ENCODE measurements at regions of chr6 and their contacts with region 1.

Region 1: GRCh38 chr6:136158387-136158821 is 91.7 kb downstream of the MTFR2 start:
- DNase-seq: peak; percentile 53 to 79 (median 72)
- ATAC-seq: peak; percentile 86 to 96 (median 90)
- H3K4me3 ChIP-seq: no peak overlapping the region
- H3K27ac ChIP-seq: peak overlapping the region in 11 of 12 donors; percentile 2 to 61 (median 23)
- H3K4me1 ChIP-seq: peaks cover 0 to 47% (median 11%) of the 10 kb centered on the region in 12 donors
- H3K27me3 ChIP-seq: no peaks in the 10 kb centered on the region
- CTCF ChIP-seq: peak in 8 of 12 donors; percentile 26 to 68 (median 36)
- POLR2A ChIP-seq: no peak

Region 2: GRCh38 chr6:135830452-135830881 is 327.9 kb before region 1 on chr6:
- intact Hi-C with region 1: no loop called
- DNase-seq: no peak
- ATAC-seq: no peak
- H3K4me3 ChIP-seq: no peak overlapping the region
- H3K27ac ChIP-seq: no peak overlapping the region
- H3K4me1 ChIP-seq: no peaks in the 10 kb centered on the region
- H3K27me3 ChIP-seq: peaks cover 0 to 5% (median 0%) of the 10 kb centered on the region in 9 donors
- CTCF ChIP-seq: no peak
- POLR2A ChIP-seq: no peak

Region 3: GRCh38 chr6:135999393-135999792 is 159.0 kb before region 1 on chr6:
- intact Hi-C with region 1: no loop called
- DNase-seq: no peak
- ATAC-seq: no peak
- H3K4me3 ChIP-seq: no peak overlapping the region
- H3K27ac ChIP-seq: no peak overlapping the region
- H3K4me1 ChIP-seq: peaks cover 0 to 17% (median 0%) of the 10 kb centered on the region in 12 donors
- H3K27me3 ChIP-seq: no peaks in the 10 kb centered on the region
- CTCF ChIP-seq: no peak
- POLR2A ChIP-seq: no peak

Region 4: GRCh38 chr6:136031982-136032381 is 126.4 kb before region 1 on chr6:
- intact Hi-C with region 1: loop called in 4 of 10 experiments (anchors 5 to 10 kb)
- DNase-seq: peak in 1 of 5 donors; percentile 45
- ATAC-seq: peak in 2 of 4 donors; percentile 55
- H3K4me3 ChIP-seq: no peak overlapping the region
- H3K27ac ChIP-seq: peak overlapping the region in 1 of 12 donors; percentile 6
- H3K4me1 ChIP-seq: peaks cover 0 to 36% (median 22%) of the 10 kb centered on the region in 12 donors
- H3K27me3 ChIP-seq: no peaks in the 10 kb centered on the region
- CTCF ChIP-seq: peak; percentile 35 to 70 (median 58)
- POLR2A ChIP-seq: no peak